Upper lobe of right lung (tissue), 1 donor: ENCODE measurements at regions of chr6 and their contacts with region 1.

Region 1: DNA sequence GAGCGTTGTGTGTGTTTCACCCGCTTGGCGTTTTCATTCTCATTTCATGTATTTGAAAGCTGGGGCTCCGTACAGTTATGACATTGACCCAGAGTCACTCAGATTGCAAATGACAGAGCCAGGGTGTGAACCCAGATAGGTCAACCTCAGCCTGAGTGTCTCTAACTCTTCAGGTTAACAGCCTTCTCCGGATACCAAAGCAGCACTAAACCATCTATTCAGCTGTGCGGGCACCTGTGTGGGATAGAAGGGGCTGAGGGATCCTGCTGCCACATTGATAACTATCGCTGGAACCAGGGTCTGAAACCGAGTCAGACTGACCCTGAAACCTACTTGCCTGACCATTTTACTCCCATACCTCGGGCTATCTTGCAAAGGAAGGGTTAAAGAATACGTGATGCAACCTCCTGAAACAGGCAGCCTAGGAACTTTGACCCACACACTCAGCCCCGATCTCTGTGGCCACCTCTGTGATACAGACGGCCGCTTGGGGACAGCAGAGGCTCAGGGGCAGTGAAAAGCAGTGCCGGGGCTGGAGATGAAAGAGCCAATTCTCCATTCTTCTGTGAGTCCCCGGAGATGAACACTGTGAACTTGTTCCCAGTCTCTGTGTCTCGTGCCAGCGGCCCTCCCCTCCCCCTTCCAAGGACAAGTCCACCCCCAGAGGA is 233.5 kb upstream of the QKI start:
- DNase-seq: peak; percentile 87
- ATAC-seq: peak; percentile 98
- H3K4me3 ChIP-seq: peak overlapping the region; percentile 5
- H3K27ac ChIP-seq: no peak overlapping the region
- H3K4me1 ChIP-seq: no peaks in the 10 kb centered on the region
- H3K27me3 ChIP-seq: no peaks in the 10 kb centered on the region
- CTCF ChIP-seq: peak; percentile 81

Region 2: GRCh38 chr6:163054641-163055040 is 126.4 kb before region 1 on chr6:
- intact Hi-C with region 1: no loop called
- DNase-seq: no peak
- ATAC-seq: no peak
- H3K4me3 ChIP-seq: no peak overlapping the region
- H3K27ac ChIP-seq: no peak overlapping the region
- H3K4me1 ChIP-seq: no peaks in the 10 kb centered on the region
- H3K27me3 ChIP-seq: no peaks in the 10 kb centered on the region
- CTCF ChIP-seq: no peak

Region 3: GRCh38 chr6:163301726-163302635 is 121.0 kb after region 1 on chr6:
- intact Hi-C with region 1: no loop called
- DNase-seq: no peak
- ATAC-seq: no peak
- H3K4me3 ChIP-seq: no peak overlapping the region
- H3K27ac ChIP-seq: no peak overlapping the region
- H3K4me1 ChIP-seq: peaks cover 4% of the 10 kb centered on the region
- H3K27me3 ChIP-seq: no peaks in the 10 kb centered on the region
- CTCF ChIP-seq: no peak

Region 4: DNA sequence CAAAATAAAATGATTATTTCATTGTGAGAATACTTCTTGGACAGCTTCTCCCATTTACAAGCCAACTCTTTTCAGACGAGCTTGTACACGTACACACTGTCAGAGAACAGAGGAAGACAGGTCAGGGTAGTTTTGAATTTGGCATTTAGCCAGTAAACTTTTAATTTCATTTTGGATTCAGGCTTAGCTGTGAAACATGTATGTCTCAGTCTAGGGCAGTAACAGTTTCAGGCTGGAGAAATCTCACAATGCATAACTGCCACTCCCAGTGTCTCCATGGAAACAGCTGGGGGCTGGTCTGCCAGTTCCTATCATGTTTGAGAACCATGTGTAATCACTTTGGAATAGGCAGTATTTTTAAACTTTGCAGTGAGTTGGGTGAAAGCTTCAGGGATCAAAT is 211.5 kb after region 1 on chr6:
- intact Hi-C with region 1: loop called (anchors 10 kb)
- DNase-seq: no peak
- ATAC-seq: peak; percentile 78
- H3K4me3 ChIP-seq: no peak overlapping the region
- H3K27ac ChIP-seq: no peak overlapping the region
- H3K4me1 ChIP-seq: peaks cover 12% of the 10 kb centered on the region
- H3K27me3 ChIP-seq: no peaks in the 10 kb centered on the region
- CTCF ChIP-seq: no peak

Region 5: DNA sequence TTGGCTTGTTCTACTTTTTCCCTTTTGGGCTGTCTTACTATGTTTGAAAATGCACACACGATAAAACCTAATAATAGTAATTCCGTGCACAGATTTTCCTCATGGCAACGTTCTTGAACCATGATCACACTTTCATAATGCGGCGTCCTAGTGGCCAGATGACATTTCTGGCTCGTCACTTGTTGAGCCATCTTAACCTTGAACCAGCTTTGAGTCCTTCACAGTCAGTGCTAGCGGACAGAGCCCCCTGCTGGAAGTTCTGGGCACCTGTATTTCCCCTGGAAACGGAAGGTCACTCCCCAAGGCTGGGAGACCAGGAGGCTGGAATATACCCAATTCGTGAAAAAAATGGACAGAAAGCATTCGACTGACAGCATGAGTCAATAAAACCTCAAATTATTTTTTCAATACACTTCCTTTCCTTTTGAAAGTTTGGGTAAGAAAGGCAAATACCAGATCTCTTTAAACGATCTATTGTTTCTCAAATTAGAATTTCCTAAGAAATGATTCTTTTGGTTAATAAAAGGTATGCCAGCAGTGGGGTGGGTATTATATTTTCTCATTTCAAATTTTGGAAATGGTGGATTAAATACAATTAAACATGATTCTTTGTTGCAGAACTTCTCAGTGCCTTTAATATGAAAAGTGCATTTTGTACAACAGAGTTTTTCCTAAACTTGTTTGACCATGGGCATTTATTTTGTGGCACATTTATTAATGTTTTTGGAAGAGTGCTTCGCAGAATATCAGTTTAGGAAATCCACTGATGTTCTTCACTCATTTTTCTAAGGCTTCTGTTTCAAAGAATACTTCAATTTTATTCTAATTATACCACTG is 775.8 kb after region 1 on chr6:
- intact Hi-C with region 1: loop called (anchors 5 kb)
- DNase-seq: peak; percentile 81
- ATAC-seq: peak; percentile 98
- H3K4me3 ChIP-seq: no peak overlapping the region
- H3K27ac ChIP-seq: no peak overlapping the region
- H3K4me1 ChIP-seq: no peaks in the 10 kb centered on the region
- H3K27me3 ChIP-seq: no peaks in the 10 kb centered on the region
- CTCF ChIP-seq: peak; percentile 87